Aorta (tissue), 5 donors: ENCODE measurements at regions of chr11 and their contacts with region 1.

Region 1: GRCh38 chr11:61792310-61793085 is at the starts of genes FEN1 and TMEM258:
- DNase-seq: peak; percentile 94 to 96
- ATAC-seq: peak; percentile 96
- H3K4me3 ChIP-seq: peak within 1 kb of the TSS; percentile 65 to 82
- H3K27ac ChIP-seq: peak within 1 kb of the TSS in 1 of 2 donors; percentile 98
- H3K4me1 ChIP-seq: no peaks in the 10 kb centered on the region
- H3K27me3 ChIP-seq: no peaks in the 10 kb centered on the region
- total RNA-seq, gene FEN1: 5.5 to 6.9 TPM
- total RNA-seq, gene TMEM258: 73.2 to 84.1 TPM

Region 2: GRCh38 chr11:61871158-61871597 is 78.7 kb after region 1 on chr11:
- intact Hi-C with region 1: loop called in 1 of 2 experiments (anchors 5 kb)
- DNase-seq: peak; percentile 90 to 95
- ATAC-seq: peak; percentile 92
- H3K4me3 ChIP-seq: no peak overlapping the region
- H3K27ac ChIP-seq: peak overlapping the region in 1 of 2 donors; percentile 49
- H3K4me1 ChIP-seq: no peaks in the 10 kb centered on the region
- H3K27me3 ChIP-seq: no peaks in the 10 kb centered on the region

Region 3: DNA sequence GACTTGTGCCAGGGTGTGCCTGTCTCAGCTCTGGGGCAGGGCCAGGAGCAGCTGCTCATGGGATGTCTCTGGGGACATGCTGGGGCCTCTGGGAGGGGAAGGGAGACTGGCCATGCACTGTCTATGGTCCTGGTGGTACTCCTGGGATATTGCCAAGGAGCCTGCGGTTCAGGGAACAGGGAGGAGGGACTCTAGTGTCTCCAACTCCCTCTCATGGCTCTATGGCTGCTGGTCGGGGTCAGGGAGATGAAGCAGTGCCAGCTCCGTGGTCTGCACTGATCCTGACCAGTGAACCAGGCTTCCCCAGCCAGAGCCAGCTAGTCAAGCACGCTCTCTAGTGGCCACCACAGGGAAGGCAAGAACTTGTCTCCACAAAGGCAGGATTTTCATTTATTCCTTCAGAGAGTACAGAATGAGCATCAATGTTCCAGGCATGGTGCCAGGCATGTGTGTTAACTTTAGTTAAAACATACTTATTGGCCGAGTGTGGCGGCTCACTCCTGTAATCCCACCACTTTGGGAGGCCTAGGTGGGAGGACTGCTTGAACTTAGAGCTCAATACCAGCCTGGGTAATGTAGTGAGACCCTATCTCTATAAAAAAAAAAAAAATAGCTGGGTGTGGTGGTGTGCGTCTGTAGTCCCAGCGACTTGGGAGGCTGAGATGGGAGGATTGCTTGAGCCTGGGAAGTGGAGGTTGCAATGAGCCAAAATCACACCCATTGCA is 155.2 kb after region 1 on chr11:
- intact Hi-C with region 1: loop called (anchors 5 to 10 kb)
- DNase-seq: peak; percentile 92 to 94
- ATAC-seq: peak; percentile 90
- H3K4me3 ChIP-seq: no peak overlapping the region
- H3K27ac ChIP-seq: no peak overlapping the region
- H3K4me1 ChIP-seq: no peaks in the 10 kb centered on the region
- H3K27me3 ChIP-seq: no peaks in the 10 kb centered on the region

Region 4: GRCh38 chr11:62108017-62108750 is 315.7 kb after region 1 on chr11:
- intact Hi-C with region 1: loop called (anchors 2 to 5 kb)
- DNase-seq: no peak
- ATAC-seq: no peak
- H3K4me3 ChIP-seq: no peak overlapping the region
- H3K27ac ChIP-seq: no peak overlapping the region
- H3K4me1 ChIP-seq: peaks cover 3 to 6% of the 10 kb centered on the region in 2 donors
- H3K27me3 ChIP-seq: no peaks in the 10 kb centered on the region

Region 5: GRCh38 chr11:62315431-62315830 is 522.9 kb after region 1 on chr11:
- intact Hi-C with region 1: loop called in 1 of 2 experiments (anchors 10 kb)
- DNase-seq: no peak
- ATAC-seq: no peak
- H3K4me3 ChIP-seq: no peak overlapping the region
- H3K27ac ChIP-seq: no peak overlapping the region
- H3K4me1 ChIP-seq: no peaks in the 10 kb centered on the region
- H3K27me3 ChIP-seq: no peaks in the 10 kb centered on the region